GM12878 (cell line): ENCODE measurements at regions of chr14 and their contacts with region 1.

Region 1: GRCh38 chr14:23631702-23632460 is 4.3 kb upstream of the DHRS2 start:
- DNase-seq: peak; percentile 51
- ATAC-seq: peak; percentile 93
- H3K4me3 ChIP-seq: no peak overlapping the region
- H3K27ac ChIP-seq: 0 out of 2 replicates have a peak overlapping the region, but pooled peaks have one; percentile 3
- H3K4me1 ChIP-seq: peaks cover 5% of the 10 kb centered on the region
- H3K27me3 ChIP-seq: no peaks in the 10 kb centered on the region
- CTCF ChIP-seq: peak; percentile 92 to 98 (median 96)
- EP300 ChIP-seq: no peak
- POLR2A ChIP-seq: no peak
- RAD21 ChIP-seq: peak; percentile 77

Region 2: GRCh38 chr14:23567192-23568020 is 64.5 kb before region 1 on chr14 and contains the start of gene AP1G2:
- CTCF ChIA-PET with region 1: interaction called, 19 read pairs
- POLR2A ChIA-PET with region 1: no interaction called
- RAD21 ChIA-PET with region 1: interaction called, 3 read pairs
- SMC1A ChIA-PET with region 1: interaction called, 5 read pairs
- in situ Hi-C with region 1: no loop called
- intact Hi-C with region 1: no loop called
- DNase-seq: peak; percentile 69
- ATAC-seq: peak; percentile 95
- H3K4me3 ChIP-seq: peak within 1 kb of the TSS; percentile 93
- H3K27ac ChIP-seq: peak within 1 kb of the TSS; percentile 76
- H3K4me1 ChIP-seq: peaks cover 11% of the 10 kb centered on the region
- H3K27me3 ChIP-seq: no peaks in the 10 kb centered on the region
- CTCF ChIP-seq: no peak
- EP300 ChIP-seq: 0 out of 4 replicates have a peak, but pooled peaks of 1 of the 2 experiments have one; percentile 31
- POLR2A ChIP-seq: peak; percentile 92
- RAD21 ChIP-seq: no peak
- polyA plus RNA-seq, gene AP1G2: 55.6 to 65.5 TPM

Region 3: GRCh38 chr14:23605931-23606585 is 25.8 kb before region 1 on chr14:
- CTCF ChIA-PET with region 1: interaction called, 67 read pairs
- POLR2A ChIA-PET with region 1: no interaction called
- RAD21 ChIA-PET with region 1: interaction called, 35 read pairs
- SMC1A ChIA-PET with region 1: interaction called, 14 read pairs
- in situ Hi-C with region 1: no loop called
- intact Hi-C with region 1: no loop called
- DNase-seq: peak; percentile 83
- ATAC-seq: peak; percentile 89
- H3K4me3 ChIP-seq: no peak overlapping the region
- H3K27ac ChIP-seq: peak overlapping the region; percentile 92
- H3K4me1 ChIP-seq: peaks cover 52% of the 10 kb centered on the region
- H3K27me3 ChIP-seq: no peaks in the 10 kb centered on the region
- CTCF ChIP-seq: no peak
- EP300 ChIP-seq: peak in 1 of 2 experiments; percentile 79; a peak in 1 of 4 replicates
- POLR2A ChIP-seq: peak; percentile 32; the same call in 1 of the 2 replicates
- RAD21 ChIP-seq: no peak

Region 4: GRCh38 chr14:23621204-23621931 is 10.5 kb before region 1 on chr14:
- CTCF ChIA-PET with region 1: interaction called, 49 read pairs
- POLR2A ChIA-PET with region 1: interaction called, 5 read pairs
- RAD21 ChIA-PET with region 1: no interaction called
- SMC1A ChIA-PET with region 1: interaction called, 7 read pairs
- in situ Hi-C with region 1: no loop called
- intact Hi-C with region 1: no loop called
- DNase-seq: no peak
- ATAC-seq: no peak
- H3K4me3 ChIP-seq: no peak overlapping the region
- H3K27ac ChIP-seq: no peak overlapping the region
- H3K4me1 ChIP-seq: no peaks in the 10 kb centered on the region
- H3K27me3 ChIP-seq: no peaks in the 10 kb centered on the region
- CTCF ChIP-seq: no peak
- EP300 ChIP-seq: no peak
- POLR2A ChIP-seq: no peak
- RAD21 ChIP-seq: no peak

Region 5: DNA sequence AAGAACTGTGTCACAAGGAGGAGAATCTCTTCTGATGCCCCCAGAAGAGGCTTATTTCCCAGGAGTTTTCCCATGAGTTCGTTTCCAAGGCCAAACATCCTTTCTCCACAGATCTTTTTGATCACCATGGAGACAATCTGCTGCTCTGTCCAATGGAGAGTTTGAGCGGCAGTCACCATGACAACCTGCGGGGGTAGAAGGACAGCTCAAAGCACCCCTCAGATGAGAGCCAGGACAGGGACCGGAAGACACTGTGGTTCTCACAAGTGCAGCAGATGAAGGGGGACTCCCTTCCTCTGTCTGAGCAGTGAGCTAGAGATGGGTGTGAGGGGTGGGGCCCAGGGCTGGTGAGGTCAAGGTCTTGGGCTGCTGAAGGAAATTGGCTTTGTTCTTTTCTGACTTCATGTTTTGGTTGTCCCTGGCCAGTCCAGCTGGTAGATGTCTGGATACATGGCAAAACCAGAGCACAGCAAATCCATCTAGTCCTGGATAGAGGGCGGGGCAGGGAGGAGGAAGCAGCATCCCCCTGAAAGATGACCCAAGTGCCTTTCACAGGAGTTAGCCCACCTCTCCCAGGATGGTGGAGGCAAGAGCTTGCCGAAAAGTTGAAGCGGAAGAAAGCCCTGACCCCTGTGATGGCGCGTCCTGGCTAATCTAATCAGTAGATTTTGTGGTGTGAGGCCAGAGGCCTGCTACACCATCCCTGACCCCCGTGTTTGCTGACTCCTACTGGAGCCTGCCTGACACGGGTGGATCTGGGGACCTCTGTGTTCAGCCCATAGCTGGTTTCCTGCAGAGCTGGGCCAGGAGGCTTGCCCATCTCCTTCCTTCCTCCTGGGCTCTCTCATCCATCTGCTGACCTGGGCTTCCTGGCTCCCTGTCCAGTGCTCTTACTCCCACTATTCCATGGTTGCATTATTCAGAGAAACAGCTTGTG is 28.7 kb after region 1 on chr14:
- CTCF ChIA-PET with region 1: interaction called, 27 read pairs
- POLR2A ChIA-PET with region 1: no interaction called
- RAD21 ChIA-PET with region 1: interaction called, 8 read pairs
- SMC1A ChIA-PET with region 1: interaction called, 16 read pairs
- in situ Hi-C with region 1: no loop called
- intact Hi-C with region 1: no loop called
- DNase-seq: no peak
- ATAC-seq: peak; percentile 94
- H3K4me3 ChIP-seq: no peak overlapping the region
- H3K27ac ChIP-seq: no peak overlapping the region
- H3K4me1 ChIP-seq: no peaks in the 10 kb centered on the region
- H3K27me3 ChIP-seq: no peaks in the 10 kb centered on the region; a peak in 3 of 4 replicates
- CTCF ChIP-seq: no peak
- EP300 ChIP-seq: no peak
- POLR2A ChIP-seq: no peak
- RAD21 ChIP-seq: no peak

Region 6: DNA sequence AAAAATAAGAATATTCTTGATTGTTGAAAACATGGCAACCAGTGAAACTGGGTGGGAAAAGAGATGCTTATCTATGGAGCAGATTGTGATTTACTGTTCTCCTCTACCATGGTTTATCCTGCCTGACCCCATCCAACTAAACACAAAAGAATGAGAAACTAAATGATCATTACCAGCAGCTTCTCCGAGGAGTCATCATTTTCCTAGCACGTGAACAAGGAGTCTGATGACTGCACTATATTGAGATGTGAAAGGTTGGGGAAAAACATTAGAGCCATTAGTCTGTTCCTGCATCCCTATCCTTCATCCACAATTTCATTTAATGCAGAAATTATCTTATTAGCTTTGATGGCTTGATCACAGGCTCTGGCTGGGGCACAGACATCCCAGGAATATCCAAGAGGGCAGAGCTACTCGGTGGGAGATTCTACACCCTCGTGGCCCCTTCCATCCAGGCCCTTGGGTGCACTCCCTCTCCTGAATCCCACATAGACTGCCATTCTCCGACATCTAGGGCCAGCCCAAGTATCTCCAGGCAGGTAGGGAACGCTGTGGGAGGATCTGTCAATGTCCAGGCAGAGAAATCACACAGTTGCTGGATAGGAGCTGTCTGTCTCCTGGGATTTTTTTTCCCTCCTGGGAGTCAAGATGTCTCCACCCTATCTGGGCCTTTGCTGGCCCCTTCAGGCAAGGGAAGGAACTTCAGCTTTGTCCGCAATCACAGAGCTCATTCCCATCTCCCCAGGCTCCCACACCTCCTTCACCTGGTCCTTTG is 278.4 kb after region 1 on chr14:
- CTCF ChIA-PET with region 1: interaction called, 57 read pairs
- POLR2A ChIA-PET with region 1: no interaction called
- RAD21 ChIA-PET with region 1: interaction called, 43 read pairs
- SMC1A ChIA-PET with region 1: interaction called, 20 read pairs
- in situ Hi-C with region 1: no loop called
- intact Hi-C with region 1: no loop called
- DNase-seq: no peak
- ATAC-seq: peak; percentile 84
- H3K4me3 ChIP-seq: no peak overlapping the region
- H3K27ac ChIP-seq: no peak overlapping the region
- H3K4me1 ChIP-seq: no peaks in the 10 kb centered on the region
- H3K27me3 ChIP-seq: peaks cover 0 to 2% of the 10 kb centered on the region in 2 experiments; a peak in 2 of 4 replicates
- CTCF ChIP-seq: peak; percentile 81 to 82 (median 81)
- EP300 ChIP-seq: no peak
- POLR2A ChIP-seq: no peak
- RAD21 ChIP-seq: peak; percentile 84